ENCODE measurements at regions of chr1 and their contacts with region 1.

Region 1: GRCh38 chr1:233394860-233395717 is 67.6 kb downstream of the MAP3K21 start:
- DNase-seq: peak in 1 of 2 experiments; percentile 60
- H3K4me3 ChIP-seq: no peak overlapping the region
- H3K4me3 Mint-ChIP-seq: no peak overlapping the region
- H3K27ac Mint-ChIP-seq: no peak overlapping the region
- H3K4me1 ChIP-seq: peaks cover 9% of the 10 kb centered on the region; the same call in 1 of the 2 replicates
- H3K4me1 Mint-ChIP-seq: peaks cover 15% of the 10 kb centered on the region
- H3K27me3 ChIP-seq: no peaks in the 10 kb centered on the region
- H3K27me3 Mint-ChIP-seq: no peaks in the 10 kb centered on the region
- CTCF ChIP-seq: peak; percentile 75 to 76

Region 2: GRCh38 chr1:233081733-233082132 is 313.4 kb before region 1 on chr1:
- CTCF ChIA-PET with region 1: no interaction called
- POLR2A ChIA-PET with region 1: no interaction called
- intact Hi-C with region 1: no loop called
- DNase-seq: peak; percentile 2 to 48
- H3K4me3 ChIP-seq: no peak overlapping the region
- H3K4me3 Mint-ChIP-seq: no peak overlapping the region
- H3K27ac Mint-ChIP-seq: no peak overlapping the region
- H3K4me1 ChIP-seq: no peaks in the 10 kb centered on the region
- H3K4me1 Mint-ChIP-seq: no peaks in the 10 kb centered on the region
- H3K27me3 ChIP-seq: no peaks in the 10 kb centered on the region
- H3K27me3 Mint-ChIP-seq: no peaks in the 10 kb centered on the region
- CTCF ChIP-seq: no peak

Region 3: GRCh38 chr1:233240829-233241682 is 154.0 kb before region 1 on chr1:
- CTCF ChIA-PET with region 1: no interaction called
- POLR2A ChIA-PET with region 1: no interaction called
- intact Hi-C with region 1: no loop called
- DNase-seq: peak; percentile 64 to 66
- H3K4me3 ChIP-seq: no peak overlapping the region
- H3K4me3 Mint-ChIP-seq: peak overlapping the region; percentile 33
- H3K27ac Mint-ChIP-seq: peak overlapping the region; percentile 35
- H3K4me1 ChIP-seq: peaks cover 47% of the 10 kb centered on the region
- H3K4me1 Mint-ChIP-seq: peaks cover 25% of the 10 kb centered on the region
- H3K27me3 ChIP-seq: no peaks in the 10 kb centered on the region
- H3K27me3 Mint-ChIP-seq: no peaks in the 10 kb centered on the region
- CTCF ChIP-seq: peak; percentile 57 to 83

Region 4: DNA sequence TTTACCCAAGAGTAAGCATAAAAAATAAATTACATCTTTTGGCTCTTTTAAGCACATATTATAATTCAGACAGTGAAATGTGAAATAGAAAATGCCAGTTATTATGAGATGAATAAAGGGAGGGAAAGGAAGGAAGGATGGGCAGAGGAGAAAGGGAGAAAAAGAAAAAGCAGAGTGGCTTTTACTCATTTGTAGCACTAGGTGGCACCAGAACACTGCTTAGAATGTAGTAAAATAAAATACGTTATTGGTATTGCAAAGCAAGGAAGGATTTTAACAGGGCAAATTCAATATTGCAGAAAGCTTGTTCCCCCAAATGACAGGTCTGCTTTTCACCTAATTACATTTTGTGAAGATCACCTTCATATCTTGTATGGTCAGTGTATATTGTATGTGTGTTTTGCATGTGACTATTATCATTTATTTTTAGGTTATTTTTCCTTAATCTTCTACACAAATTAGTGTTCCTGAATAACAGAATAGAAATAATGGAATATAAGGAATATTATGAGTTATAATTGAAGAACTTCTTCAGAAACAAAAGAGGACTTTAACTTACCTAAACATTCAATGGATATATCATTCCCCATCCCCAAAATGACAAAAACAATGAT is 90.5 kb before region 1 on chr1:
- CTCF ChIA-PET with region 1: no interaction called
- POLR2A ChIA-PET with region 1: no interaction called
- intact Hi-C with region 1: loop called (anchors 10 kb)
- DNase-seq: peak in 1 of 2 experiments; percentile 18
- H3K4me3 ChIP-seq: no peak overlapping the region
- H3K4me3 Mint-ChIP-seq: no peak overlapping the region
- H3K27ac Mint-ChIP-seq: no peak overlapping the region
- H3K4me1 ChIP-seq: no peaks in the 10 kb centered on the region
- H3K4me1 Mint-ChIP-seq: no peaks in the 10 kb centered on the region
- H3K27me3 ChIP-seq: no peaks in the 10 kb centered on the region; the same call in 1 of the 2 replicates
- H3K27me3 Mint-ChIP-seq: no peaks in the 10 kb centered on the region
- CTCF ChIP-seq: peak; percentile 71 to 75

Region 5: DNA sequence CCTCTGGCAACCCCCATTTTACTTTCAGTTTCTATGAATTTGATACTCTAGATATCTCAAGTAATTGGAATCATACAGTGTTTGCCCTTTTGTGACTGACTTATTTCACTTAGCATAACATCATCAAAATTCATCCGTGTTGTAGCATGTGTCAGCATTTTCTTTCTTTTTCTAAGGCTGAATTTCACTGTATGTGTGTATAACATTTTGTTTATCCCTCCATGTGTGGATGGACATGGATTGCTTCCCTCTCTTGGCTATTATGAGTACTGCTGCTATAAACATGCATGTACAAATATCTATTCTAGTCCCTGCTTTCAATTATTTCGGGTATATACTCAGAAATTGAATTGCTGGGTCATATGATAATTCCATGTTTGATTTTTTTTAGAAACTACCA is 29.7 kb after region 1 on chr1:
- CTCF ChIA-PET with region 1: no interaction called
- POLR2A ChIA-PET with region 1: no interaction called
- intact Hi-C with region 1: loop called (anchors 2 kb)
- DNase-seq: no peak
- H3K4me3 ChIP-seq: no peak overlapping the region
- H3K4me3 Mint-ChIP-seq: no peak overlapping the region
- H3K27ac Mint-ChIP-seq: no peak overlapping the region
- H3K4me1 ChIP-seq: 0 out of 2 replicates have a peak, but pooled peaks cover 3% of the 10 kb centered on the region
- H3K4me1 Mint-ChIP-seq: no peaks in the 10 kb centered on the region
- H3K27me3 ChIP-seq: no peaks in the 10 kb centered on the region
- H3K27me3 Mint-ChIP-seq: peaks cover 22% of the 10 kb centered on the region
- CTCF ChIP-seq: peak; percentile 12 to 21

Region 6: GRCh38 chr1:233518349-233518748 is 123.3 kb after region 1 on chr1:
- CTCF ChIA-PET with region 1: no interaction called
- POLR2A ChIA-PET with region 1: no interaction called
- intact Hi-C with region 1: no loop called
- DNase-seq: peak in 1 of 2 experiments; percentile 14
- H3K4me3 ChIP-seq: no peak overlapping the region
- H3K4me3 Mint-ChIP-seq: no peak overlapping the region
- H3K27ac Mint-ChIP-seq: no peak overlapping the region
- H3K4me1 ChIP-seq: no peaks in the 10 kb centered on the region
- H3K4me1 Mint-ChIP-seq: no peaks in the 10 kb centered on the region
- H3K27me3 ChIP-seq: no peaks in the 10 kb centered on the region
- H3K27me3 Mint-ChIP-seq: no peaks in the 10 kb centered on the region
- CTCF ChIP-seq: peak; percentile 1 to 26

Region 7: GRCh38 chr1:233790662-233791375 is 395.7 kb after region 1 on chr1:
- CTCF ChIA-PET with region 1: interaction called, 3 read pairs
- POLR2A ChIA-PET with region 1: no interaction called
- intact Hi-C with region 1: loop called (anchors 1 kb)
- DNase-seq: peak in 1 of 2 experiments; percentile 43
- H3K4me3 ChIP-seq: no peak overlapping the region
- H3K4me3 Mint-ChIP-seq: no peak overlapping the region
- H3K27ac Mint-ChIP-seq: no peak overlapping the region
- H3K4me1 ChIP-seq: no peaks in the 10 kb centered on the region
- H3K4me1 Mint-ChIP-seq: no peaks in the 10 kb centered on the region
- H3K27me3 ChIP-seq: no peaks in the 10 kb centered on the region
- H3K27me3 Mint-ChIP-seq: no peaks in the 10 kb centered on the region
- CTCF ChIP-seq: peak; percentile 67 to 96

Region 8: DNA sequence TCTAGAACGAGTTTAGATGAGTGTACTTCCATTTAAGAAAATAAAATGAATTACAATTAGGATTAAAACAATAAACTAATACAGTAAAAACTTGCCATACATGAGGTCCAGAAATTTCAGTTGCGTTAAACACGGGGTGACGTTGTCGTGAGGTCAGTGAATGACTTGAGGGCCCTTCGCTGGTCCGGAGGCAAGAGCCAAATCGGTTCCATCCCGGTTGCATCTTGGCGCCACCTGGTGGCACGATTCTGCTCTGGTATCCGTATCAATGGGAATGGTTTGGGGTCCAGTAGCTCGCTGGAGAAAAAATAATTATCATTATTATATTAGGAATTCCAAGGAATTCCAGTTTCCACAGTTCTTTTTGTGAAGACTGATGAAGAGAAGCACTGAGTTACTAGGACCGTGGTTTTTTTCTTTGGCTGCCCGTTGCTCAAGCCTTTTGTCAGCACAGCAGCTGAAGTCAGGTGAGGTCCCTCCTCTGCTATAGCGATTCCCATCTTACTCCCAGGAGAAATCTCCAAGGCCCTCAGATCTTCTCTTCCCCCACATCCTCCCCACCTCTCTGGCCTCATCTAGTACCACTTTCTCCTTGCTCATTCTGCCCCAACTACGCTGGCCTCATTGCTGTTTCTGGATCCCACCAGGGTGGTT is 670.8 kb after region 1 on chr1:
- CTCF ChIA-PET with region 1: no interaction called
- POLR2A ChIA-PET with region 1: no interaction called
- intact Hi-C with region 1: loop called (anchors 1 kb)
- DNase-seq: peak; percentile 71 to 79
- H3K4me3 ChIP-seq: no peak overlapping the region
- H3K4me3 Mint-ChIP-seq: no peak overlapping the region
- H3K27ac Mint-ChIP-seq: no peak overlapping the region
- H3K4me1 ChIP-seq: no peaks in the 10 kb centered on the region
- H3K4me1 Mint-ChIP-seq: no peaks in the 10 kb centered on the region
- H3K27me3 ChIP-seq: no peaks in the 10 kb centered on the region
- H3K27me3 Mint-ChIP-seq: peaks cover 2% of the 10 kb centered on the region
- CTCF ChIP-seq: peak; percentile 82 to 91

Region 9: GRCh38 chr1:234114648-234115307 is 719.7 kb after region 1 on chr1:
- CTCF ChIA-PET with region 1: interaction called, 3 read pairs
- POLR2A ChIA-PET with region 1: no interaction called
- intact Hi-C with region 1: loop called (anchors 2 kb)
- DNase-seq: peak in 1 of 2 experiments; percentile 45
- H3K4me3 ChIP-seq: no peak overlapping the region
- H3K4me3 Mint-ChIP-seq: no peak overlapping the region
- H3K27ac Mint-ChIP-seq: no peak overlapping the region
- H3K4me1 ChIP-seq: no peaks in the 10 kb centered on the region
- H3K4me1 Mint-ChIP-seq: no peaks in the 10 kb centered on the region
- H3K27me3 ChIP-seq: no peaks in the 10 kb centered on the region; the same call in none of the 2 replicates
- H3K27me3 Mint-ChIP-seq: peaks cover 12% of the 10 kb centered on the region
- CTCF ChIP-seq: peak; percentile 60 to 66